Endothelial cell of umbilical vein (primary cell): ENCODE measurements at regions of chr6 and their contacts with region 1.

Region 1: DNA sequence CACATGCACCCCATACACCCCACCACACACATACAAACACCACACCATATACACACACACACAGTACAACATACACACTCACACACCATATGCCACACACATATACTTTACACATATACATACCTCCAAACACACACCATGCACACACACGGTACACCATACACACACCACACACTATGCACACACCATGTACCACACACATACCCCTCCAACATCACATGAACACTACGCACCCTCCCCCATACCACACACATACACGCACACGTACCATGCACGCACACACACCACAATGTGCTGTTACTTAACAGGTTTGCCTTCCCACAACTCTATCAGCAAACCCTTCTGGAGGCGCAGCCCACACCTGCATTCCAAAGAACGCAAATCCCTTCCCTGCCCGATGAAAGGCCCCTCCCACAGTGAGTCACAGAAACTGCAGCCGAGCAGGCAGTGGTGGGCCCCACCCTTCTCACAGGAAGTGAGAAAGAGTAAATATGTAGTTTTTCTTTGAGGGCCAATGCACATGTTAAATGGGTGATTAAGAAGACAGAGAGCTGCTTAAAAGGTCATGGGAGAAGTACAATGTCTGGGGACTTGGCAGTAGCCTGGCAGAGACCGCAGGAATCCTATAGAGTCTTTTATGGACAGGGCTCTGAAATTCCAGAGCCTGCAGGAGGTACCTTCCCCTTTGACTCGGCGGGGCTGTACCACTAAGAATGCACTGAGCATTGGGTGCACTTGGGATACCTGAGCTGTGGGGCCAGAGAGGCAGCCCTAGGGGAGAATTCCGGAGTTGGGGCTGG is 34.1 kb upstream of the EZR start:
- DNase-seq: peak; percentile 66
- H3K4me3 ChIP-seq: no peak overlapping the region
- H3K27ac ChIP-seq: peak overlapping the region; percentile 14
- H3K4me1 ChIP-seq: peaks cover 24% of the 10 kb centered on the region
- H3K27me3 ChIP-seq: no peaks in the 10 kb centered on the region
- CTCF ChIP-seq: no peak
- POLR2A ChIP-seq: no peak

Region 2: GRCh38 chr6:158869826-158870648 is 16.8 kb after region 1 on chr6:
- CTCF ChIA-PET with region 1: no interaction called
- POLR2A ChIA-PET with region 1: no interaction called
- dilution Hi-C with region 1: no loop called
- intact Hi-C with region 1: loop called (anchors 1 kb)
- DNase-seq: peak; percentile 83
- H3K4me3 ChIP-seq: peak overlapping the region in 2 of 3 experiments; percentile 29 to 65
- H3K27ac ChIP-seq: peak overlapping the region; percentile 9
- H3K4me1 ChIP-seq: peaks cover 7% of the 10 kb centered on the region
- H3K27me3 ChIP-seq: peaks cover 6 to 18% of the 10 kb centered on the region in 2 experiments
- CTCF ChIP-seq: no peak
- POLR2A ChIP-seq: no peak